ENCODE measurements at regions of chr1 and their contacts with region 1.

Region 1: DNA sequence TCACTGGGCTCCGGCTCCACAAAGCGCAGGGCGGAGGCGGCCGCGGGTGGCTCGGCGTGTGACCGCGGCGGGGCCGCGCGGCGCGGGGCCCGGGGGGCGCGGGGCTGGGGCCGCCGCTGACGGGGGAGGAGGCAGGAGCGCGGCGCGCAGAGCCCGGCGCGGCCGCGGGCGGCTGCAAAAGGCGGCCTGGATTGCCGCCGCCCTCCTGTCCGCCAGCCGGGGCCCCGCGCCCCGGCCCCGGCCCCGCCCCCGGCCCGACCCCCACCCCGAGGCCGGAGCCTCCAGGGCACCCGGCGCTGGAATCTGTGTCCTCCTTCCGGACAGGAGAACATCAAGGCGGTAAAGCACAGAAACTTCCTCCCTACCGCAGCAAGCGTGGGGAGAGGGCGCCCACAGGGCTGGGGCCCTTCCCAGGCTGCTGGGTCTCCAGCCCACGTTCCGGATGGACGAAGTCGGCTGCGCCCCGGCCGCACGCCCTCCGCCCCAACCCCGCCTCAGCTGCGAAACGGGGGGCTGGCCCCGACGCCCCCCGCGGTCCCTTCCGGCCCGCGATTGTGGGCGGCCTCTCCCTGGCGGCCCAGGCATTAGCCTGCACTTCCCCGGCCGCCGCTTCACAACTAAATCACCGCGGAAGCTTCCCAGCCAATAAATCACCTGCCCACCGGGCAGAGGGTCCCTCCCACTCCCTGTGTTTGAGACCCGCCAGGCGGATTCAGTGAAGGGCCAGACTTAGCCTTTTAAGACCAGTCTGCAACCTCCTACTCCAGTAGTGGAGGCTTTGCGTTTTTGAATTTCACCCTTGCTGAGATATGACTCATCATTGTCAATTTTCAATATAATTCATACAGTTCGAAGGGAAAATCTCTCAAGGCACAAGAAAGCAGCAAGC is 106.0 kb downstream of the SLC45A1 start:
- DNase-seq: peak in 12 of 14 experiments; percentile 22 to 74 (median 47)
- ATAC-seq: peak; percentile 54
- H3K4me3 ChIP-seq: peak overlapping the region; percentile 88
- H3K4me3 Mint-ChIP-seq: peak overlapping the region; percentile 97
- H3K27ac ChIP-seq: peak overlapping the region; percentile 54 to 87
- H3K27ac Mint-ChIP-seq: peak overlapping the region; percentile 96
- H3K4me1 ChIP-seq: peaks cover 67% of the 10 kb centered on the region
- H3K4me1 Mint-ChIP-seq: peaks cover 44% of the 10 kb centered on the region
- H3K27me3 ChIP-seq: no peaks in the 10 kb centered on the region
- H3K27me3 Mint-ChIP-seq: no peaks in the 10 kb centered on the region
- CTCF ChIP-seq: no peak

Region 2: DNA sequence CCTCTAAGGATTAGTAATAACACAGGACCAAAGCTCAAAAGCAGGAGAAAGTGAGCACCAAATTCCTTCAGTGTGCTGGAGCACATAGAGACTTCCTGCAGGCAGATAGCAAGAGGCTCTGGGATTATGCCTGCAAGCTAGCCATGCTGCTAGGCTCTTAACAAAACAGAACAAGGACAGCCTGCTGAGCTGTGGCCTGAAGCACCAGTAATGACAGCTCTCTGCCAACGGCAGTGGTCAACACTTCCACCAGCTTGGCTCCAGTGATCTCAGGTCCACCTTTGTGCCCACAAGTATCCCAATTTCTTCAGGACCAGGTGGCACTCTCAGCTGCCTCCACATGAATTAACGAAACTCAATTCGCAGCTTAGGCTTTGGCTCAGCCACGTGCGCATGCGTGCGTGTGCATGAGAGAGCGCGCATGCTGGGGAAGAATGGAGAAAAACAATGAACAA is 41.8 kb before region 1 on chr1:
- CTCF ChIA-PET with region 1: interaction called, 3 read pairs
- POLR2A ChIA-PET with region 1: interaction called, 4 read pairs
- intact Hi-C with region 1: loop called in 1 of 2 experiments (anchors 5 kb)
- DNase-seq: no peak
- ATAC-seq: no peak
- H3K4me3 ChIP-seq: no peak overlapping the region
- H3K4me3 Mint-ChIP-seq: peak overlapping the region; percentile 87
- H3K27ac ChIP-seq: peak overlapping the region in 1 of 2 donors; percentile 62
- H3K27ac Mint-ChIP-seq: peak overlapping the region; percentile 98
- H3K4me1 ChIP-seq: peaks cover 71% of the 10 kb centered on the region
- H3K4me1 Mint-ChIP-seq: peaks cover 91% of the 10 kb centered on the region
- H3K27me3 ChIP-seq: no peaks in the 10 kb centered on the region
- H3K27me3 Mint-ChIP-seq: no peaks in the 10 kb centered on the region
- CTCF ChIP-seq: no peak

Region 3: GRCh38 chr1:8409106-8409505 is 14.8 kb before region 1 on chr1:
- CTCF ChIA-PET with region 1: interaction called, 30 read pairs
- POLR2A ChIA-PET with region 1: interaction called, 9 read pairs
- intact Hi-C with region 1: loop called in 1 of 2 experiments (anchors 1 kb)
- DNase-seq: peak in 3 of 14 experiments; percentile 49 to 72 (median 63)
- ATAC-seq: peak; percentile 79
- H3K4me3 ChIP-seq: no peak overlapping the region
- H3K4me3 Mint-ChIP-seq: peak overlapping the region; percentile 65
- H3K27ac ChIP-seq: peak overlapping the region; percentile 19 to 23
- H3K27ac Mint-ChIP-seq: peak overlapping the region; percentile 69
- H3K4me1 ChIP-seq: peaks cover 69% of the 10 kb centered on the region
- H3K4me1 Mint-ChIP-seq: peaks cover 76% of the 10 kb centered on the region
- H3K27me3 ChIP-seq: no peaks in the 10 kb centered on the region
- H3K27me3 Mint-ChIP-seq: no peaks in the 10 kb centered on the region
- CTCF ChIP-seq: peak; percentile 48

Region 4: DNA sequence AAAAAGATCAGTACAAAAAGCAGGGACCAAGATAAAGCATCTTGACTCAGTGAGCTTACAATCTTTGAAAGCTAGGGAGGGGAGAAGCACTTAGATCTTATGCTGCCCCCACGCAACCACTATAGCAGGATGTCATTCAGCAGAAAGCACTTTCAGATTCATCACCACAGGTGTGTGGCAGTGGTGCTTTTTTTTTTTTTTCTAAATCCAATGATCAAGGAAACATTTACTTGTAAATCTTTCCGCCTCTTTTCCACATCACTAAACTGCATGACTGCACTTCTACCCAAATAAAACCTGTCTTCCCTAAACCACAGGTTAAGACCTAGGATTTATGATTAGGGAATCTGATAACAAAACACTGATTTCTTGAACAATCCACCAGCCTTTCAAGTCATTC is 48.8 kb after region 1 on chr1:
- CTCF ChIA-PET with region 1: no interaction called
- POLR2A ChIA-PET with region 1: interaction called, 7 read pairs
- intact Hi-C with region 1: loop called in 1 of 2 experiments (anchors 5 kb)
- DNase-seq: peak in 8 of 14 experiments; percentile 13 to 62 (median 38)
- ATAC-seq: peak; percentile 96
- H3K4me3 ChIP-seq: no peak overlapping the region
- H3K4me3 Mint-ChIP-seq: no peak overlapping the region
- H3K27ac ChIP-seq: no peak overlapping the region
- H3K27ac Mint-ChIP-seq: peak overlapping the region; percentile 61
- H3K4me1 ChIP-seq: peaks cover 8% of the 10 kb centered on the region
- H3K4me1 Mint-ChIP-seq: peaks cover 46% of the 10 kb centered on the region
- H3K27me3 ChIP-seq: no peaks in the 10 kb centered on the region
- H3K27me3 Mint-ChIP-seq: no peaks in the 10 kb centered on the region
- CTCF ChIP-seq: no peak

Region 5: GRCh38 chr1:8510041-8510823 is 86.3 kb after region 1 on chr1:
- CTCF ChIA-PET with region 1: no interaction called
- POLR2A ChIA-PET with region 1: no interaction called
- intact Hi-C with region 1: loop called in 1 of 2 experiments (anchors 5 kb)
- DNase-seq: peak in 11 of 14 experiments; percentile 5 to 83 (median 44)
- ATAC-seq: peak; percentile 92
- H3K4me3 ChIP-seq: peak overlapping the region; percentile 19
- H3K4me3 Mint-ChIP-seq: peak overlapping the region; percentile 67
- H3K27ac ChIP-seq: peak overlapping the region; percentile 57 to 76
- H3K27ac Mint-ChIP-seq: peak overlapping the region; percentile 89
- H3K4me1 ChIP-seq: peaks cover 35% of the 10 kb centered on the region
- H3K4me1 Mint-ChIP-seq: peaks cover 53% of the 10 kb centered on the region
- H3K27me3 ChIP-seq: no peaks in the 10 kb centered on the region
- H3K27me3 Mint-ChIP-seq: no peaks in the 10 kb centered on the region
- CTCF ChIP-seq: no peak

Region 6: DNA sequence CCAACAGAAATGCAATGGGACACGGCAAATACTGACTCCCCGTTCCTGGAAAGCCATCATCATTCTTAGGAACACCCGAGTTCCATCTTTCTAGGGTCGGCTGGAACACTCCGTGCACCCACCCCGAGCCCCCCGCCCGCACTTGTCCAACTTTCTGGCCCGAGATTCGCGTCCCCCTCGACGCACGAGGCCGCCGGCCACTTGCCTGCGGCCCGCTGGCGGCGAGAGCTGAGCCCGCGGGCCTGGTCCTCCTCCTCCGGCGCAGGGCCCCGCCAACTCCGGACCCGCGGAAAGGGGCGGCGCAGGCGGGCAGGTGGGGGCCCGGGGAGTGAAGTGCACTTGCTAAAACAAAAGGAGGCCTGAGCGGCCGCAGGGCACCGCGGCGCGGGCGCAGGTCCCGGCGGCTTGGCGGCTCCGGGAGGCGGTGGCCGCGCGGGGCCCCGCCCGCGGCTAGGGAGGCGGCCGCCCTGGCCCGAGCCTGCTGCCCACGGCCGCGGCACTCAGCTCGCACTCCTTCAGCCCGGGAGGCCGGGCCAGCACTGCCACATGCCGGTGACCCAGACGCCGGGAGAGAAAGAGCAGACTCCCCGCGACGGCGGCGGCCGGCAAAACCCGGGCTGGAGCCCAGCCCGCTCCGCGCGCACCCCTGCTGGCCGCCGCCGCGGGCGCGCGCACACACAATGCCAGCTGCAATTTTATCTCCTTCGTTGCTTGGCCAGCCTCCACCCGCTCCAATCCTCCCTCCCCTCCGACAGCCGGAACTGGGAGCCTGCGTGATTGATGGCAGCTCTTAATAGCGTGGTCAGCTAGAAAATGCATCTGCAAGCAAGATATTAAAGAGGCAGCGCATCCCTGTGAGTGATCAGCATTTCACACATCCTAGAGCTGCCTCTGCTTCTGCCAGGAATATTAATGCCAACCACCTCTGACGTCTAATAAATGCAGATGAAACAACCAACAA is 279.2 kb after region 1 on chr1:
- CTCF ChIA-PET with region 1: no interaction called
- POLR2A ChIA-PET with region 1: no interaction called
- intact Hi-C with region 1: loop called in 1 of 2 experiments (anchors 5 kb)
- DNase-seq: peak in 12 of 14 experiments; percentile 5 to 75 (median 34)
- ATAC-seq: no peak
- H3K4me3 ChIP-seq: peak overlapping the region; percentile 32
- H3K4me3 Mint-ChIP-seq: peak overlapping the region; percentile 87
- H3K27ac ChIP-seq: no peak overlapping the region
- H3K27ac Mint-ChIP-seq: peak overlapping the region; percentile 36
- H3K4me1 ChIP-seq: peaks cover 27% of the 10 kb centered on the region
- H3K4me1 Mint-ChIP-seq: peaks cover 30% of the 10 kb centered on the region
- H3K27me3 ChIP-seq: peaks cover 27 to 36% of the 10 kb centered on the region in 2 experiments
- H3K27me3 Mint-ChIP-seq: peaks cover 61% of the 10 kb centered on the region
- CTCF ChIP-seq: no peak

Region 7: DNA sequence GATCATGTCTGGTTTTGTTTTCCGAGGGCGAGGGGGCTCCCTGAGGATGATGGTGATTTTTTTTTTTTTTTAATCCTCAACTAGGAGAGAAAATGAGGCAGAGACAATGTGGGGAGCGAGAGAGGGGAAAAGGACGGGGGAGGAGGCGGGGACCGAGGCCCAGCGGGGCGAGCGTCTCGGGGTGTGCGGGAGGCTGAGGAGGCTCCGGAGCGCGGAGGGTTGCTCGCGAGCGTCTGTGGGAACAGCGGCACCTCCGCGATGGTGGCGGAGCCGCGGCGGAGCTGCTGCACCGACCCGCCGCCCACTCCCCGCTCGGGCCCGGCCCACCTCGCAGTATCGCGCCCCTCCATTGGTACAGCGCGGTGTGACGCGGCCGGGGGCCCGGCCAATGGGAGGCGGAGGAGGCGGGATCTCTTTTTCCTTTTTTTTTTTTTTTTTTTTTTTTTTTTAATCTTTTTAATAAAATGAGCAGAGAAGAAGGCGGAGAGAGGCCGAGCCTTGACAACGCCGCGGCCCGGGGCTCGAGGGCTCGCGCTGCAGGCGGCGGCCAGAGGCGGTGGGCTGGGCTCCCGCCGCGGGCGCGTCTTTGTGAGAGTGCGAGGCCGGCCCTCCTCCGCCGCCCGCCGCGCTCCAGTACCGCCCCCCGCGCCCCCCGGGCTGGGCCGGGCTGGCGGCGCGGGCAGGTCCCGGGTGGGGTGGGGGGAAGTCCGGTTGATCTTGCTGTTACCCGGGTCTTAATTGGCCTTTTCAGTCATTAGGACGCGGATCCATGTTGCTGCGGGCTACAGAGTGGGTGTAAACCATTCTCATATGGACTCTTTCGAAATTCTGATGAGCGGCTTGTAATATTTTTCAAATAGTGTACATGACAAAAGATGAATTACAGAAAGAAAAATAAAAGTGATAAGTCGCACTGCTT is 393.8 kb after region 1 on chr1 and contains the start of gene RERE:
- CTCF ChIA-PET with region 1: no interaction called
- POLR2A ChIA-PET with region 1: no interaction called
- intact Hi-C with region 1: loop called in 1 of 2 experiments (anchors 10 kb)
- DNase-seq: peak; percentile 93 to 99 (median 96)
- ATAC-seq: peak; percentile 95
- H3K4me3 ChIP-seq: peak within 1 kb of the TSS; percentile 96
- H3K4me3 Mint-ChIP-seq: peak within 1 kb of the TSS; percentile 92
- H3K27ac ChIP-seq: peak within 1 kb of the TSS; percentile 80 to 83
- H3K27ac Mint-ChIP-seq: peak within 1 kb of the TSS; percentile 86
- H3K4me1 ChIP-seq: peaks cover 20% of the 10 kb centered on the region
- H3K4me1 Mint-ChIP-seq: peaks cover 44% of the 10 kb centered on the region
- H3K27me3 ChIP-seq: peaks cover 0 to 4% of the 10 kb centered on the region in 2 experiments
- H3K27me3 Mint-ChIP-seq: peaks cover 11% of the 10 kb centered on the region
- CTCF ChIP-seq: no peak
- total RNA-seq, gene RERE: 78.4 to 84.0 TPM

Region 8: DNA sequence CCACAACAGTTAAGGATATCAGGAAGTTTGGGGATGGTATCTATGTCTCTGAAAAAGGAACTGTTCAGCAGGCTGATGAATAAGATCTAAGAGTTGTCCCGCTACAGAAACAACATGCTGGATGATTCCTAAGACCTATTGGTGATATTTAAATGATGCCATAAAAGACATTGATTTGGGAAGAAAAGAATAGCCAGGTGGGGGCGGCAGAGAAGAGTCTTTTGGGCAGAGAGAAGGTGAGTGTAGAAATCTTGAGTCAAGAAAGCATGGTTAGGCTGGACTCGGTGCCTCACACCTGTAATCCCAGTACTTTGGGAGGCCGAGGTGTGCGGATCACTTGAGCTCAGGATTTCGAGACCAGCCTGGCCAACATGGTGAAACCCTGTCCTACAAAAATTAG is 1153.0 kb after region 1 on chr1:
- CTCF ChIA-PET with region 1: no interaction called
- POLR2A ChIA-PET with region 1: no interaction called
- intact Hi-C with region 1: no loop called
- DNase-seq: no peak
- ATAC-seq: no peak
- H3K4me3 ChIP-seq: no peak overlapping the region
- H3K4me3 Mint-ChIP-seq: no peak overlapping the region
- H3K27ac ChIP-seq: no peak overlapping the region
- H3K27ac Mint-ChIP-seq: no peak overlapping the region
- H3K4me1 ChIP-seq: no peaks in the 10 kb centered on the region
- H3K4me1 Mint-ChIP-seq: no peaks in the 10 kb centered on the region
- H3K27me3 ChIP-seq: no peaks in the 10 kb centered on the region
- H3K27me3 Mint-ChIP-seq: no peaks in the 10 kb centered on the region
- CTCF ChIP-seq: no peak